Natural killer cell (primary cell): ENCODE measurements at regions of chr5 and their contacts with region 1.

Region 1: DNA sequence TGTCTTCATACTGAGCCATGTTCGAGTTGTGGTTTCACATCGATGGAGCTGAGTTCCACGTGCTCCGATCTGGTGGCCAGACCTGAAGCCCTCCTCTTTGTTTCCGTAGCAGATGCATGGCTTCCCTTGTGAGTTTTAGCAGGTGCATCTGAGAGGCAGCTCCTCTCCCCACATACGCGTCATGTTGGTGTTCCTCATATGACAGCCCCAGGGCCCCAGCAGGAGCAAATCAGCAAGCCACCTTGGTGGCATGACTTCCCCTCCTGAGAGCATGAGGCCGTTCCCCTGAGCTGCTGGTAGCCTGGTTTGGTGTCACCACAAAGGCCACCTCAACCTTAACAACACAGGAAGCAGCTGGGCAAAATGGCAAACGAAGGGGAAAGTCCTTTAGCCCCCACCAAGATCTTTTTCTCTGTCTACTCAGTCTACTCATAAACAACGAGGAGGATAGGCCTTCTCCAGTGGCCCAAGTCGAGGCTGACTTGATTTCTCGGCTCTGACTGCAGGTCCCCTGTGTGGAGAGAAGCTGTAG is 5.9 kb downstream of the CYFIP2 start:
- DNase-seq: peak; percentile 80 to 95
- ATAC-seq: peak; percentile 81 to 91 (median 91)
- H3K4me3 ChIP-seq: no peak overlapping the region
- H3K4me3 Mint-ChIP-seq: peak overlapping the region; percentile 89
- H3K27ac ChIP-seq: peak overlapping the region; percentile 86
- H3K27ac Mint-ChIP-seq: peak overlapping the region; percentile 93 to 99
- H3K4me1 ChIP-seq: peaks cover 73% of the 10 kb centered on the region
- H3K4me1 Mint-ChIP-seq: peaks cover 95 to 96% of the 10 kb centered on the region in 2 donors
- H3K27me3 ChIP-seq: no peaks in the 10 kb centered on the region
- H3K27me3 Mint-ChIP-seq: no peaks in the 10 kb centered on the region
- CTCF ChIP-seq: no peak

Region 2: GRCh38 chr5:157142317-157143126 is 129.3 kb before region 1 on chr5 and contains the start of gene MED7:
- intact Hi-C with region 1: loop called (anchors 1 kb)
- DNase-seq: peak; percentile 82 to 99
- ATAC-seq: peak; percentile 95 to 99 (median 96)
- H3K4me3 ChIP-seq: peak within 1 kb of the TSS; percentile 86
- H3K4me3 Mint-ChIP-seq: peak within 1 kb of the TSS; percentile 98
- H3K27ac ChIP-seq: peak within 1 kb of the TSS; percentile 89
- H3K27ac Mint-ChIP-seq: peak within 1 kb of the TSS; percentile 97 to 98
- H3K4me1 ChIP-seq: peaks cover 24% of the 10 kb centered on the region
- H3K4me1 Mint-ChIP-seq: peaks cover 32 to 52% of the 10 kb centered on the region in 2 donors
- H3K27me3 ChIP-seq: no peaks in the 10 kb centered on the region
- H3K27me3 Mint-ChIP-seq: no peaks in the 10 kb centered on the region
- CTCF ChIP-seq: no peak
- total RNA-seq, gene MED7: 9.6 to 13.3 (median 12.4) TPM

Region 3: DNA sequence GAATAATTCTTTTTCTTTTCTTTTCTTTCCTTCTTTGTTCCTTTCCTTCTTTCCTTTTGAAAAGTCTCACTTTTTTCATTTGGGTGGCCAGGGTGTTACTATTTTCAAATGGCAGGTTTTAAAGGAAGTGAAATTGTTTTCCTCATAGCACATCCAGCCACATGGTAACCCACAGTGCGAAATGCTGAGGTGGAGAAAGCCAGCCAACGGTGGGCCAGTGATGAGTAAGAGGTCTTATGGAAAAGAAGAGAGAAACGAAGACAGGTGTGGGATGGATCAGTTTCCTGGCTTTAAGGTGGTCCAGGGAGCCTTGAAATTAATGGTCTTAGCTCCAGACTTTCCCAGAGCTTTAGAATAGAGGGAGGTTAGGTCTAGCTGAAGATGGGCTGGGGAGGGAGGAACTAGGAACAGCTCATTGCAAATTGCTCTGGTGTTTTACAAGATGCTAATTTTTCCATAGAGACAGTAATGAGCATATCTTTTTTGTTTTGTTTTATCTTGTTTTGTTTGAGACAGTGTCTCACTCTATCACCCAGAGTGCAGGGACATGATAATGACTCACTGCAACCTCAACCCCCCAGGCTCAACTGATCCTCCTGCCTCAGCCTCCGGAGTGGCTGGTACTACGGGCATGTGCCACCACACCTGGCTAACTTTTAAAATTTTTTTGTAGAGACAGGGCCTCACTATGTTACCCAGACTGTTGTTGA is 73.4 kb before region 1 on chr5:
- intact Hi-C with region 1: loop called (anchors 5 kb)
- DNase-seq: peak; percentile 53 to 74
- ATAC-seq: peak; percentile 57 to 70 (median 66)
- H3K4me3 ChIP-seq: no peak overlapping the region
- H3K4me3 Mint-ChIP-seq: peak overlapping the region; percentile 73
- H3K27ac ChIP-seq: peak overlapping the region; percentile 48
- H3K27ac Mint-ChIP-seq: peak overlapping the region; percentile 82 to 97
- H3K4me1 ChIP-seq: peaks cover 70% of the 10 kb centered on the region
- H3K4me1 Mint-ChIP-seq: peaks cover 82 to 85% of the 10 kb centered on the region in 2 donors
- H3K27me3 ChIP-seq: no peaks in the 10 kb centered on the region
- H3K27me3 Mint-ChIP-seq: no peaks in the 10 kb centered on the region
- CTCF ChIP-seq: no peak

Region 4: DNA sequence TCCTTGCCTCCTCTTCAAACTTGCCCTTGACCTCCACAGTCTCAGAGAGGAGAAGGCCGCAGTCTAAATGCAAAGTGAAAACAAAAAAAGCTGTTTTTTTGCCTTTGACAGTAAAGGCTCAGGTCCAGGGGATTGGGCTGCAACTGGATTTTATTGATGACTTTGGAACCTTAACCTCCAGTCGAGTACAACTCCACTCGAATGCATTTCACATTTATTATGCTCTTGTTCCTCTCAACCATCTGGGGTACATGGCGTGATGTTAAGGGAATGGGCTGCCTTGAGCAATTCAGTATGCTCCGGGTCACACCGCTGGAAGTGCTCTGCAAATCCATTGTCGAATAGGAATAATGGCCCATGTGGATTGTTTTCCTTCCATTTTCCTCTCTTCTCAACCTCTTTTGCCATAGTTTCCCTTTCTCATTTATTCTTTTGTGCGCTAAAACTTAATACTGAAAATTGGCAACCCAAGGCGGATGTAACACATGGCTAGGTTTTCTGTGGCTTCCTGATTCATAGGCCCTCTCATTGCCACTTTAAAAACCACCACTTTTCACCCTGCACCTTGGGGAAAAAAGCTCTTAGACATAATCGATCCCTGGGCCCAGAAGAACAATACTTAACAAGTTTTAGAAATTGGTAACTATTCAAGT is 56.8 kb before region 1 on chr5:
- intact Hi-C with region 1: loop called (anchors 1 kb)
- DNase-seq: peak in 1 of 2 donors; percentile 81
- ATAC-seq: peak; percentile 59 to 78 (median 66)
- H3K4me3 ChIP-seq: no peak overlapping the region
- H3K4me3 Mint-ChIP-seq: peak overlapping the region; percentile 89
- H3K27ac ChIP-seq: peak overlapping the region; percentile 73
- H3K27ac Mint-ChIP-seq: peak overlapping the region; percentile 86 to 92
- H3K4me1 ChIP-seq: peaks cover 76% of the 10 kb centered on the region
- H3K4me1 Mint-ChIP-seq: peaks cover 81 to 87% of the 10 kb centered on the region in 2 donors
- H3K27me3 ChIP-seq: no peaks in the 10 kb centered on the region
- H3K27me3 Mint-ChIP-seq: no peaks in the 10 kb centered on the region
- CTCF ChIP-seq: no peak

Region 5: GRCh38 chr5:157290981-157291711 is 19.3 kb after region 1 on chr5:
- intact Hi-C with region 1: loop called (anchors 2 kb)
- DNase-seq: peak in 1 of 2 donors; percentile 47
- ATAC-seq: peak; percentile 48 to 50 (median 49)
- H3K4me3 ChIP-seq: no peak overlapping the region
- H3K4me3 Mint-ChIP-seq: peak overlapping the region; percentile 25
- H3K27ac ChIP-seq: peak overlapping the region; percentile 2
- H3K27ac Mint-ChIP-seq: peak overlapping the region; percentile 71 to 75
- H3K4me1 ChIP-seq: peaks cover 13% of the 10 kb centered on the region
- H3K4me1 Mint-ChIP-seq: peaks cover 68 to 73% of the 10 kb centered on the region in 2 donors
- H3K27me3 ChIP-seq: no peaks in the 10 kb centered on the region
- H3K27me3 Mint-ChIP-seq: no peaks in the 10 kb centered on the region
- CTCF ChIP-seq: no peak

Region 6: DNA sequence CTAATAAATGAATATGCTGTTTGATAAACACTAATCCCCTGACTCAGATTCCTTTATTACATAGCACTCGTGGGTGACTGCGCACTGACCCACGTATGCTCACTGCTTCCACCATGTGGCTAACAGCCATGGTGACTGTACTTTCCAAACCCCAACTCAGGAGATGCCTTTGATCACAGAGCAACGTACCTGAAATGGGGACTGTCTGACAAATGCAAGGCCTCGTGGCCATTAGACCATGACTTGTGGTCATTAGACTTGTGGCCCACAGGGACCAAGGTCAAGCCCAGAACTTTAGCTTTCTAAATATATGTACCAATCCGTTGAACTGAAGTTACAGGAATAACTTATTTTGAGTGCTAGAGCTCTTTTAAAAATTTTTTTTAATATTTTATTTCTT is 40.7 kb after region 1 on chr5:
- intact Hi-C with region 1: loop called (anchors 5 kb)
- DNase-seq: peak; percentile 50 to 88
- ATAC-seq: peak; percentile 88 to 98 (median 90)
- H3K4me3 ChIP-seq: no peak overlapping the region
- H3K4me3 Mint-ChIP-seq: no peak overlapping the region
- H3K27ac ChIP-seq: peak overlapping the region; percentile 27
- H3K27ac Mint-ChIP-seq: peak overlapping the region; percentile 81 to 90
- H3K4me1 ChIP-seq: peaks cover 29% of the 10 kb centered on the region
- H3K4me1 Mint-ChIP-seq: peaks cover 16 to 25% of the 10 kb centered on the region in 2 donors
- H3K27me3 ChIP-seq: no peaks in the 10 kb centered on the region
- H3K27me3 Mint-ChIP-seq: no peaks in the 10 kb centered on the region
- CTCF ChIP-seq: peak; percentile 74